ENCODE measurements at regions of chr7 and their contacts with region 1.

Region 1: DNA sequence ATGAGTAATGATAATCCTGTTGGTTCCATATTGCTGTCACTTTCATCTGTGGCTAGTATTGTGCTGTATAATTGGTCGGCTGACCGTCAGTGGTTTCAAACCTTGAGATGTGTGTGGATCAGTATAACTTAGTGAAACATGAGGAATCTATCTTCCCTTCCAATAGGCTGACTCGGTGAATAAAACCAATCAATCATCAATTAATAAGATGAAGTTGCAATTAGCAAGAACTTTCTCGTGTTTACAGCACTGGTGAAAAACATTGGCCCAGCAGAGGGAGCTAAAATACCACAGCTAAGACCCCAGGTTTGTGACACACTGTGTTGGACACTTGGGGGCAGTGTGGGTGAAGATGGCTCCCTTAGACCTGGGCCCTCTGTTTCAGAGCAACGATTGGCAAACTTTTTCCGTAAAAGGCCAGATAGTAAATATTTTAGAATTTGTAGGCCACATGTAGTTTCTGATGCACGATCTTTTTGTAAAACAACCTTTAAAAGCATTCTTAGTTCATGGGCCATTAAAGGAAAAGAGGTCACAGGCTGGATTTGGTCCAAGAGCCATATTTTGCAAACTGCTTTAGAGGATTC is 47.8 kb downstream of the STRA8 start:
- DNase-seq: no peak

Region 2: GRCh38 chr7:135232720-135233119 is 48.7 kb before region 1 on chr7:
- intact Hi-C with region 1: no loop called
- DNase-seq: no peak

Region 3: GRCh38 chr7:135558337-135558767 is 276.9 kb after region 1 on chr7:
- intact Hi-C with region 1: loop called (anchors 5 to 10 kb)
- DNase-seq: no peak

Region 4: DNA sequence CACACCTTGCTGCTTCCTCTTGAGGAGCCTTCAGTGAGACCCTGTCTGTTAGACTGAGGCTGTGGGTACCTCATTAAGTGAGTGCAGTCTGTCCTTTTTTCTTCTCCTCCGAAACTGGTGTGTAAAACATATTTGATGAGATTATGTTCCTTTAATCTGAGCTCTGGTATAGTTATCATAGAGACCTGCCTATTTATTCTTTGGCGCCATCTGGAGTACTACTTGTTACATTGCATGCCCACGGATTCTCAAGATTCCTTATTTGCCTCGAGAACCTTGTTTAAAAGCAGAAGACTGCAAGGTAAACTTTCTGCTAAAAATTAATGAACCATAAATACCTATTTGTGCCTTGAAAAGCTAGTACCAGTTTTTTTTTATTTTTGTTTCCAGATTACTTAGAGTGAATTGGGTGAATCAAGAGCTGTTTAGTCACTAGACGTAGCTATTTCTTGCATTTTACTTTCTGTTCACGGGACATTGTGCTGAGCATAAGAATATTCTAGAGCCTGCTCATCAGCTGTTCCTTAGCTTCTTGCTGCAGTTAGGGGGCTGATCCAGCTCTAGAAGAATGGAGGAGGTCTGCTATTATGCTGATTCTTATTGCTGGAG is 363.9 kb after region 1 on chr7:
- intact Hi-C with region 1: loop called in 1 of 2 experiments (anchors 10 kb)
- DNase-seq: no peak